Ovary (tissue), 10 donors: ENCODE measurements at regions of chr14 and their contacts with region 1.

Region 1: DNA sequence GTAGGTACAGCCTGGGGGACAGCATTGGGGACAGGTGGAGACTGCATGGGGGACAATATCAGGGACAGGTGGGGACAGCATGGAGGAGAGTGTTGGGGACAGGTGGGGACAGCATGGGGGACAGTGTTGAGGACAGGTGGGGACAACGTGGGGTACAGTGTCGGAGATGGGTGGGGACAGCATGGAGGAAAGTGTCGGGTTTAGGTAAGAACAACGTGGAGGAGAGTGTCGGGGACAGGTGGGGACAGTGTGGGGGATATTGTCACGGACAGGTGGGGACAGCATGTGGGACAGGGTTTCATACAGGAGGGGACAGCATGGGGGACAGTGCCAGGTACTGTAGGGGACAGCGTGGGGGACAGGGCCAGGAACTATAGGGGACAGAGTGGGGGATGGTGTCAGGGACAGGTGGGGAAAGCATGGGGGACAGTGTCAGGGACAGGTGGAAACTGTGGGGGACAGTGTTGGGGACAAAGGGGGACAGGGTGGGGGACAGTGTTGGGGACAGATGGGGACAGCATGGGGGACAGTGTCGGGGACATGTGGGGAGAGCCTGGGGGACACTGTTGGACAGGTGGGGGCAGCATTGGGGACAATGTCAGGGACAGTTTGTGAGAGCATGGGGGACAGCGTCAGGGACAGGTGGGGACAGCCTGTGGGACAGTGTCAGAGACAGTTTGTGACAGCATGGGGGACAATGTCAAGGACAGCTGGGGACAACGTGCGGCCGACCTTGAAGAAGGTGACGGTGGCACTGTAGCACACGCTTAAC is 213.1 kb downstream of the TMEM121 start:
- DNase-seq: no peak
- H3K4me3 ChIP-seq: no peak overlapping the region
- H3K27ac ChIP-seq: no peak overlapping the region
- H3K4me1 ChIP-seq: no peaks in the 10 kb centered on the region
- H3K27me3 ChIP-seq: no peaks in the 10 kb centered on the region
- CTCF ChIP-seq: no peak
- EP300 ChIP-seq: no peak
- POLR2A ChIP-seq: no peak

Region 2: DNA sequence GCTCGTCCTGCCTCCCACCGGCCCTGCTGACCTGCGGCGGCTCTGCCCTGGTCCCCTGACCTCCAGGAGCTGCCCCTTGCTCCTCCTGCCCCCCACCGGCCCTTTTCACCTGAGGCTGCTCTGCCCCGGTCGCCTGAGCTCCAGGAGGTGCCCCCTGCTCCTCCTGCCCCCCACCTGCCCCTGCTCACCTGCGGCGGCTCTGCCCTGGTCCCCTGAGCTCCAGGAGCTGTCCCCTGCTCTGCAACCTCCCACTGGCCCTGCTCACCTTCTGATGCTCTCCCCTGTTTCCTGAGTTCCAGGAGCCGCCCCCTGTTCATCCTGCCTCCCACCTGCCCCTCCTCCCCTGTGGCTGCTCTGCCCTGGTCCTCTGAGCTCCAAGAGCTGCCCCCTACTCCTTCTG is 111.8 kb before region 1 on chr14:
- intact Hi-C with region 1: loop called in 1 of 4 experiments (anchors 5 kb)
- DNase-seq: no peak
- H3K4me3 ChIP-seq: no peak overlapping the region
- H3K27ac ChIP-seq: no peak overlapping the region
- H3K4me1 ChIP-seq: no peaks in the 10 kb centered on the region
- H3K27me3 ChIP-seq: no peaks in the 10 kb centered on the region
- CTCF ChIP-seq: no peak
- EP300 ChIP-seq: no peak
- POLR2A ChIP-seq: no peak

Region 3: GRCh38 chr14:105660829-105661531 is 78.5 kb before region 1 on chr14:
- intact Hi-C with region 1: no loop called
- DNase-seq: no peak
- H3K4me3 ChIP-seq: no peak overlapping the region
- H3K27ac ChIP-seq: no peak overlapping the region
- H3K4me1 ChIP-seq: peaks cover 3% of the 10 kb centered on the region
- H3K27me3 ChIP-seq: no peaks in the 10 kb centered on the region
- CTCF ChIP-seq: no peak
- EP300 ChIP-seq: no peak
- POLR2A ChIP-seq: no peak

Region 4: DNA sequence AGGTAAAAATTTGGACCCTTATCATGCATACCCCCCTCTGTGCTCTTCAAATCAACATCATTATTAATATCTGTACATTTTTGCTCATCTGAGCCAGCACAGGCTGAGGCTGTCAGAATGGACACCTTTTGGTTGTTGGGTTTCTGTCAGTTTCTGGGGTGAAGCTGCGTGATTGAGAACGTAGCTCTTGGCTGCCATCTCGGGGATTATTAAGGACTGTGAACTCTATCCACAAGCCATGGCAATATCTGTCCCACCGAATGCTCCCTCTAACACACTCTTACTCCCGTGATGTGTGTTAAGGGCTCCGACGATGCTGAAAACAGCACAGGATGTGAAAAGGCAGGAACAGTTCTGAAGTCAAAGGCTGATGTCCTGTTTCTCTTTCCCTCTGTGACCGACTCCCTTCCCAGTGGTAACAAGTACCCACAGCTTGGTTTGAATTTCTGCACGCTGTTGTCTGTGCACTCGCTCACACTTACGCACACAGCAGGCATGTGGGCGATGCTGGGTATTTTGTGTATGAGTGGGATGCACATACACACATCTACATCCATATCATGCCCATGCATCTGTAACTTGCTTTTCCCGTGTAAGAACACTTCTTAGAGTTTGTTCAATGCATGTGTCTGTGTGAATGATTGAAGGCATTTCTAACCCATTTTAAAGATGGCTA is 192.4 kb after region 1 on chr14:
- intact Hi-C with region 1: no loop called
- DNase-seq: peak in 1 of 5 donors; percentile 3
- H3K4me3 ChIP-seq: no peak overlapping the region
- H3K27ac ChIP-seq: no peak overlapping the region
- H3K4me1 ChIP-seq: no peaks in the 10 kb centered on the region
- H3K27me3 ChIP-seq: no peaks in the 10 kb centered on the region
- CTCF ChIP-seq: no peak
- EP300 ChIP-seq: no peak
- POLR2A ChIP-seq: no peak